ENCODE measurements at regions of chr20 and their contacts with region 1.

Region 1: GRCh38 chr20:43749734-43750294 is 23.0 kb upstream of the GTSF1L start:
- DNase-seq: peak; percentile 90
- ATAC-seq: peak; percentile 19
- H3K4me3 Mint-ChIP-seq: no peak overlapping the region
- H3K27ac Mint-ChIP-seq: peak overlapping the region; percentile 51
- H3K4me1 Mint-ChIP-seq: peaks cover 44% of the 10 kb centered on the region
- H3K27me3 Mint-ChIP-seq: no peaks in the 10 kb centered on the region
- CTCF ChIP-seq: peak; percentile 76

Region 2: DNA sequence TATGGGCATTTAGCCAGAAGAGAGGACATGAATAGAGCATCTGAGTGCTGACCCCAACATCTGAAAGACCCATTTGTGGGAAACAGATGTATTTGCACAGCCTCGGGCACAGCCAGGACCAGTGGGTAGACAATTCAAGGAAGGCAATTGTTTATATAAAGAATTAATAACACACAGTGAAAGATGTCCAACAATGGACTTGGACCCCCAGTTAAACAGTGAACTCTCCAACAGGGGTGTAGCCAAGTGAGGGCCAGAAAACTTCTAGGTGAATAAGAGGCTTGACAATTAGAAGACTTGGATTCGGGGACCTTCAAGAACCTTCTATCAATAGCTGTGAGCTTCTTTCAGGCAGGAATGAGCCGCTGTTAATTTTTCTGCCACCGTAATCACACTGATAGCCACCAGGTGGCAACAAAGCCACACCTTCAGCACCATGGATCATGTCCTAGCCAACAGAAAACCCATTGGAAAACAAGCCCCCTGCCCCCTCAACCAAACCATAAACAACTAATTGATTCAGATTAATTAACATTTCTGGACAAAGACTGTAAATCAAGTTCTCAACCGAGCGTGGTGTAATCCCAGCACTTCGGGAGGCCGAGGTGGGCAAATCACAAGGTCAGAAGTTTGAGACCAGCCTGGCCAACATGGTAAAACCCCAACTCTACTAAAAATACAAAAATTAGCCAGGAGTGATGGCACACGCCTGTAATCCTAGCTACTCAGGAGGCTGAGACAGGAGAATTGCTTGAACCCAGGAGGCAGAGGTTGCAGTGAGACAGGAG is 300.9 kb before region 1 on chr20:
- CTCF ChIA-PET with region 1: no interaction called
- POLR2A ChIA-PET with region 1: no interaction called
- intact Hi-C with region 1: loop called (anchors 1 kb)
- DNase-seq: no peak
- ATAC-seq: peak; percentile 72
- H3K4me3 Mint-ChIP-seq: no peak overlapping the region
- H3K27ac Mint-ChIP-seq: no peak overlapping the region
- H3K4me1 Mint-ChIP-seq: peaks cover 3% of the 10 kb centered on the region
- H3K27me3 Mint-ChIP-seq: peaks cover 28% of the 10 kb centered on the region
- CTCF ChIP-seq: no peak

Region 3: GRCh38 chr20:43666376-43667328 is 83.2 kb before region 1 on chr20 and contains the start of gene MYBL2:
- CTCF ChIA-PET with region 1: interaction called, 4 read pairs
- POLR2A ChIA-PET with region 1: interaction called, 20 read pairs
- intact Hi-C with region 1: no loop called
- DNase-seq: peak; percentile 77
- ATAC-seq: peak; percentile 78
- H3K4me3 Mint-ChIP-seq: peak within 1 kb of the TSS; percentile 89
- H3K27ac Mint-ChIP-seq: peak within 1 kb of the TSS; percentile 92
- H3K4me1 Mint-ChIP-seq: peaks cover 54% of the 10 kb centered on the region
- H3K27me3 Mint-ChIP-seq: no peaks in the 10 kb centered on the region
- CTCF ChIP-seq: no peak
- total RNA-seq, gene MYBL2: 99.5 and 102 TPM in 2 replicates

Region 4: DNA sequence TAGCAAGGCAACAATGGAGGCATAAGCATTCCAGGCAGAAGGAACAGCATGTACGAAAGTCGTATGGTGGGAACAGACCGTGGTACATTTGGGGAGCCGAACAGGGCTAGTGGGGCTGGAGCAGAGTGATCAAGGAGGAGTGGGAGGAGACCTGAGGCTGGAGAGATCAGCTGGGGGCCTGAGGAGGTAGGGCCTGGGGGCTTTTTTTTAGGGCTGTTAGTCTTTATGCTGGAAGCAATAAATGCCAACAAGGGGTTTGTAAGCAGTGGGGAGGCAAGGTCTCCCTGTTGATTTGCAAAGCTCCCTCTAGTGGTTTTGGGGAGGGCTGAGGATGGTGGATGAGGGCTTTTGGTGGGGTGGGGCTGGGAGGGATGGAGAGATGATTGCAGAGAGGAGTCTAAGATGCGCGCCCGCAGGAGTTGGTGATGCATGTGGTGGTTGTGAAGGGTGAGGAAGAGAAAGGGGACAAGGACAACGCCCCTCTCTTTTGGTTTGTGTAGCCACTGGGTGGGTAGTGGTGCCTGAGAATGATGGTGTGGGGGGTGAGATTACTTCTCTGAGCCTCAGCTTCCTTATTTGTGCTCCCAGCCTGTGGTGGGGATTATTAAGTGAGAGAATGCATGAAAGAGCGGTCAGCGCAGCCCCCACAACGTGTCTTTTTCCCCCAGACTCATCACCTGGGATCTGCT is 90.7 kb after region 1 on chr20:
- CTCF ChIA-PET with region 1: interaction called, 22 read pairs
- POLR2A ChIA-PET with region 1: interaction called, 15 read pairs
- intact Hi-C with region 1: loop called (anchors 1 kb)
- DNase-seq: no peak
- ATAC-seq: peak; percentile 82
- H3K4me3 Mint-ChIP-seq: no peak overlapping the region
- H3K27ac Mint-ChIP-seq: no peak overlapping the region
- H3K4me1 Mint-ChIP-seq: peaks cover 6% of the 10 kb centered on the region
- H3K27me3 Mint-ChIP-seq: no peaks in the 10 kb centered on the region
- CTCF ChIP-seq: no peak

Region 5: DNA sequence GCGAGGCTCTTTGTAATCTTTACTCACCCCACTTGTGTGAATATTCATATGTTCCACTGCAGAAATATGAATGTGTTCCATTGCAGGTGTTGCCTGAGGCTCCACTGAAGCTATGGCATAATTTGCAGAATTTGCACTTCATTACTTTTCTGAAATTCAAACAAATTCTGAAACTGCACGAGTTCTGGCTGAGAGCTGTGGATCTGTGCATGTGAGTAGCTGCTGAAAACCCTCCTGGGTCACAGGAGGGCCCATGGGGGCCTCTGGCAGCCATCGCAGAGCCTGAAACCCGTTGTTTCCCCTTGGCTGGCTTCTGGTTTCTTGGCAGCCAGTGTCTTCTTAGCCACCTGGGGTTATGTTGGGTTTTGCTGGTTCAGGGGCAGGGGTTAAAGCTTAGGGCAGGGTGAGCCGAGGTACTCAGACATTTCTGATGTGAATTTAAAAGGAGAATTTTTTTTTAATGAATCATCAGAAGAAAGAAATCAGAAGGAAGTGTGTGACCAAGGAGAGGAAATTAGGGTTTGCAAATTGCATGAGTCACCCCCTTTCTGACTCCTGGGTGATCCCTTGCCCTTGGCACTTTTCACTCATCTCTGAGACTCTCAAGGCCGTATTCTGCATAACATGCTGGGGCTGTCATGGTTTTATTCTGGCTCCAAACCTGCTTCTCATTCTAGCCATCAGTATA is 205.4 kb after region 1 on chr20:
- CTCF ChIA-PET with region 1: interaction called, 3 read pairs
- POLR2A ChIA-PET with region 1: no interaction called
- intact Hi-C with region 1: loop called (anchors 1 kb)
- DNase-seq: peak; percentile 33
- ATAC-seq: peak; percentile 81
- H3K4me3 Mint-ChIP-seq: no peak overlapping the region
- H3K27ac Mint-ChIP-seq: peak overlapping the region; percentile 69
- H3K4me1 Mint-ChIP-seq: peaks cover 41% of the 10 kb centered on the region
- H3K27me3 Mint-ChIP-seq: no peaks in the 10 kb centered on the region
- CTCF ChIP-seq: no peak

Region 6: DNA sequence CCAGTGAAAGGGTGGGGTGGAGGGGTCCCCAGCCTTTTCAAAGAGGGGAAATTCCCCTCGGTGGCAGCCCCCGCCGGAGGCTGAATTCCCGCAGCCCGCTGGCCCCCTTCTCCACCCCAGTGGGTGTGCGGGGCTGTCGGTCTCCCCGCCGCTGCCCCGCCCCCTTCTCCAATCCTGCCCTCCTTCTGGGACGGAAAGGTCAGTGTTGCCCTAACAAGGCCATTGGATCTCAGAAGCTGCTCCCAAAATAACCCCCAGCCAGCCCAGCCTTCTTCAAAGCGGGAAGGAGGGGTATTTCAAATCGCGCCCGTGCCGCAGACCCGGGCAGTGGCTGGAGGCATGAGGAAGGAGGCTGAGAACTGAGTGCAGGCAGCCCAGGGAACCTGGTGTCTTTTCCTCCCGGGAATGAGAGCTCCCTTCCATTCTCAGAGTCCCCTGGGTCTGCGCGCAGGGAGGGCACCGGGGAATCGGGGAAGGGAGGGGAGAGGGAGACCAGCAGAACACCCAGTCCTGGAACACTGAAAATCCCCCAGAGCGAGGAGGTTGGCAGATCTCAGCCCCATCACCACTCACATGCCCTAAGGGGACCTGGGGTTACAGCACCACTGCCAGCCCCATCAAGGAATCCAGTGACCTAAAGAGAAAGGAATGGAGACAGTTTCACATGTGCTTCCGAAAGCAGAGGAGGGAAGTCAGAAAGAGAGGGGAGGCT is 437.4 kb after region 1 on chr20 and contains the start of gene JPH2:
- CTCF ChIA-PET with region 1: interaction called, 16 read pairs
- POLR2A ChIA-PET with region 1: no interaction called
- intact Hi-C with region 1: loop called (anchors 1 kb)
- DNase-seq: no peak
- ATAC-seq: peak; percentile 16
- H3K4me3 Mint-ChIP-seq: peak within 1 kb of the TSS; percentile 64
- H3K27ac Mint-ChIP-seq: no peak within 1 kb of the TSS
- H3K4me1 Mint-ChIP-seq: peaks cover 21% of the 10 kb centered on the region
- H3K27me3 Mint-ChIP-seq: peaks cover 41% of the 10 kb centered on the region
- CTCF ChIP-seq: no peak
- total RNA-seq, gene JPH2: not detected in 2 replicates

Measured in activated B cell treated with CpG ODN at 0.5 μM for 24 hours (primary cell).